Ascending aorta (tissue), 2 donors: ENCODE measurements at regions of chr11 and their contacts with region 1.

Region 1: GRCh38 chr11:104968355-104968855 is at the start of gene CASP4:
- DNase-seq: no peak
- H3K4me3 ChIP-seq: peak within 1 kb of the TSS; percentile 71 to 74
- H3K27ac ChIP-seq: peak within 1 kb of the TSS; percentile 84 to 85
- H3K4me1 ChIP-seq: peaks cover 0 to 20% of the 10 kb centered on the region in 2 donors
- H3K27me3 ChIP-seq: no peaks in the 10 kb centered on the region
- CTCF ChIP-seq: no peak
- total RNA-seq, gene CASP4: 56.6 TPM

Region 2: GRCh38 chr11:104918113-104918824 is 50.1 kb before region 1 on chr11:
- intact Hi-C with region 1: loop called (anchors 5 kb)
- DNase-seq: no peak
- H3K4me3 ChIP-seq: peak overlapping the region; percentile 51 to 69
- H3K27ac ChIP-seq: peak overlapping the region; percentile 63 to 69
- H3K4me1 ChIP-seq: peaks cover 3 to 6% of the 10 kb centered on the region in 2 donors
- H3K27me3 ChIP-seq: no peaks in the 10 kb centered on the region
- CTCF ChIP-seq: no peak